Activated CD4-positive, alpha-beta memory T cell treated with anti-CD3 and anti-CD28 coated beads, Interleukin-2, amount 10 ng/mL, durations not matched to agents 7 days and 5 days (primary cell): ENCODE measurements at regions of chr6 and their contacts with region 1.

Region 1: GRCh38 chr6:158213925-158214674 is 46.0 kb downstream of the GTF2H5 start:
- DNase-seq: peak; percentile 61
- H3K4me3 Mint-ChIP-seq: no peak overlapping the region
- H3K27ac Mint-ChIP-seq: no peak overlapping the region
- H3K4me1 Mint-ChIP-seq: peaks cover 21% of the 10 kb centered on the region
- H3K27me3 Mint-ChIP-seq: peaks cover 2% of the 10 kb centered on the region

Region 2: GRCh38 chr6:158072083-158072721 is 141.9 kb before region 1 on chr6:
- CTCF ChIA-PET with region 1: no interaction called
- POLR2A ChIA-PET with region 1: no interaction called
- DNase-seq: peak; percentile 74
- H3K4me3 Mint-ChIP-seq: no peak overlapping the region
- H3K27ac Mint-ChIP-seq: no peak overlapping the region
- H3K4me1 Mint-ChIP-seq: peaks cover 46% of the 10 kb centered on the region
- H3K27me3 Mint-ChIP-seq: no peaks in the 10 kb centered on the region

Region 3: DNA sequence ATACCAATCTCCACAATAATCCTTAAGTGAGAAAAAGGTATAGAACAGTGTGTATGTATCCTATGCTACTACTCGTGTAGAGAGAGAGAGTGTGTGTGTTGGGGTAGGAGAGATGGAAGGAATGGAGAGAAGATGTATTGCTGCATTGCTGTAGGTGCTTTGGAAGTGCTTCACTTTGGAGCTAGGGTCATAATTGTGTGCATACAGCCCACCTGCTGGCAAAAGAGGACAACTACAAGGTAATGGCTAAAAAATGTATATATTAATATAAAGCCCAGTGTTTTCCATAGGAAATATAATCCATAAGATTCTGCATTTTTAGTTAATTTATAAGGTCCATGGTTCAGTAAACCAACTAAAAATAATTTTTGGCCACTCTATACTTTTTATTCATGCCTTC is 82.2 kb before region 1 on chr6:
- CTCF ChIA-PET with region 1: no interaction called
- POLR2A ChIA-PET with region 1: no interaction called
- DNase-seq: peak; percentile 23
- H3K4me3 Mint-ChIP-seq: no peak overlapping the region
- H3K27ac Mint-ChIP-seq: no peak overlapping the region
- H3K4me1 Mint-ChIP-seq: no peaks in the 10 kb centered on the region
- H3K27me3 Mint-ChIP-seq: no peaks in the 10 kb centered on the region

Region 4: DNA sequence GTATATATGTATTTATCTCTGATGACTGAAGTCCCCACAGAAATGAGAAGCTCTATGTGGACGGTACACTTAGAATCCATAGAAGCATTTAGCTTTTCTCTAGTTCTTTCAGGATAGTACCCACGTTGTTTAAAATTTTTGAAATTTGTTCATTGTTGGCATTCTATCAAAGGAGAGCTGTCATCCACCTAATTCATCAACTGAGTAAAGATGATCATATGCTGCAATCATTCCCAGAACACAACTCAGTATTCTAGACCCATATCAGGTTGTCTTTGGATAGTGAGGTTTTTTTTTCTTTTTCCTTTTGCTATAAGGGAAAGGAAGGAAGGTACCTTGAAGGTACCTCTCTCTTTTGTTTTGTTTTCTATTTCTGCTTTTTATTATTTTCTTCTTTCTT is 55.4 kb before region 1 on chr6:
- CTCF ChIA-PET with region 1: no interaction called
- POLR2A ChIA-PET with region 1: no interaction called
- DNase-seq: no peak
- H3K4me3 Mint-ChIP-seq: no peak overlapping the region
- H3K27ac Mint-ChIP-seq: no peak overlapping the region
- H3K4me1 Mint-ChIP-seq: no peaks in the 10 kb centered on the region
- H3K27me3 Mint-ChIP-seq: no peaks in the 10 kb centered on the region

Region 5: DNA sequence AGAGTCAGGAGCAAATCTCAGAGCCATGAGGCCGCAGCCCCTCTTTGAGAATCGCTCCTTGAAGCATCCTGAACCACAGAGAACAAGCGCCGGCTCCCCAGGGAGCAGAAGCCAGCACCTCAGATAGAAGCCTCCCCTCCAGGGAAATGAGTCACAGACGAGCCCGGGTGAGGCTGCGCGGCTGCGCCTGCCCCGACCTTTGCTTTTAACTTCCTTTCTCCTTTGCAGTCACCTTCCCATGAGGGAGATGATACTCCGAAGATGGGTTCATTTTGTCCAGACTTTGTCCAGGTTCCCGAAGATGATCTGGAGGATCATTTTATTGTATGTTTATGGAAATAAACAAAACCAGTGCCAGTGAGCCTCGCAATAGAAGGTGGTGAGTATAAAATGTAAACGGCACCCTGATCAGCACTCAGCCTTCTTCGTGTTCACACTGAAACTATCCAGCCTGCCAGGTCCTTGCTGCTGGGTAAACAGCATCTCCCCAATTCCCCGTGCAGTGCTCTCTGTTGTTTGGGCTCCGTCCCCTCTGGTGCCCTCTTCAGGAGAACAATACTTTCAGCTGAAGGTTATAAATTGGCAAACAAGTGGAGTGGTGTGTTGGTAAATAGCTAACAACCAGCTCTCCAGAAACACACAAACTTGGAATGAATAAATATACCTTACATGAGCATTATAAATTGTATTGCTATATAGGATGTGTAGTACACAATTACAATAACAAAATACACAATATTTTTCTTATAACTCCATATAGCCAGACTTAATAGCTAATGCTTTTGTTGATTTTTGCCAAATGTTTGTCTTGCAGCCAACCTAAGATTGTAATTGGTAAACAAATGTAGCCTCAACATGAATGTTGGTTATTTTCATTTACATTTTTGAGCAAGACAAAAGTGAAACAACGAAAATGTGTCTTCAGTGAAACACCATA is 304.4 kb after region 1 on chr6:
- CTCF ChIA-PET with region 1: interaction called, 12 read pairs
- POLR2A ChIA-PET with region 1: no interaction called
- DNase-seq: peak; percentile 74
- H3K4me3 Mint-ChIP-seq: peak overlapping the region; percentile 81
- H3K27ac Mint-ChIP-seq: peak overlapping the region; percentile 87
- H3K4me1 Mint-ChIP-seq: peaks cover 41% of the 10 kb centered on the region
- H3K27me3 Mint-ChIP-seq: peaks cover 11% of the 10 kb centered on the region

Region 6: DNA sequence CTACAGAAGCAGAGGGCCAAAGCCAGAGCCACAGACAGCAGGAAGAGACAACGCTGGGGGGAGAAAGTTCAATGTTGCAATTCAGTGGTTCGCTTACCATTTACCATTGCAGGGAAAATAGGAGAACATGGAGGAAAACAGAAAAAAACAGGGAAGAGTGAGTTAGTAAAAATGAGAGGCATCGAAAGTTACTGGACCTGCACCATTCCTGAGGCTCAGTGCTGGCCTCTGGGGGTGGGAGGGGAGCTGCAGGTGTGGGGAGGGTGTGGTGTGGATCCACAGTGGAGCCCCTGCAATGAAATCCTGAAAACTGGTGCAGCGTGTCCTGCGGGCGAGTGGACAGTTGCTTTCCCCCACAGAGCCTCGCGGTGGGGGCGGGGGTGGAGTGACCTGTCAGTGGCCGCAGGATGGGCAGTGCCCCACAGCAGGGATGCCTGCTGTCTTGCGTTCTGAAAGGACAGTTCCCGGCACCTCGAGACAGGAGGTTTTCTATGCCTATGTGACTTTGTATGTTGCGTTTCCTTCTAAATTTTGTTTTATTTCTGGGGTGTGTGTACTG is 351.5 kb after region 1 on chr6:
- CTCF ChIA-PET with region 1: interaction called, 10 read pairs
- POLR2A ChIA-PET with region 1: no interaction called
- DNase-seq: no peak
- H3K4me3 Mint-ChIP-seq: peak overlapping the region; percentile 62
- H3K27ac Mint-ChIP-seq: peak overlapping the region; percentile 94
- H3K4me1 Mint-ChIP-seq: peaks cover 91% of the 10 kb centered on the region
- H3K27me3 Mint-ChIP-seq: no peaks in the 10 kb centered on the region

Region 7: DNA sequence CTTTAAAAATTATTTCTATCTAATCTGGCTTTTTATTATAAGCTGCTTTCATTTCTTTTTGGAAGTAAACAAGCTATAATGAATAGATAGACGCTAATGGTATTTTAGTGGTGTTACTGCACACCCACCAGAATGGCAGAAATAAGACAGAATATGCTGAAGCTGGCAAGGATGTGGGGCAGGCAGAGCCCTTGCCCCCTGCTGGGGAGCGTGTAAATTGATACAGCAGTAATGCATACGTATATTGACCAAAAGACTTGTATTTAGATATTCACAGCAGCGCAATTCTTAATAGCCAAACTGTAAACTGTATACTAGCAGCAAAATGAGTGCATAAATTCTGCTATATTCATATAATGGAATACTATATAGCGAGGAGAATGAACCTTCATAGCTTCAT is 381.1 kb after region 1 on chr6:
- CTCF ChIA-PET with region 1: interaction called, 12 read pairs
- POLR2A ChIA-PET with region 1: no interaction called
- DNase-seq: no peak
- H3K4me3 Mint-ChIP-seq: no peak overlapping the region
- H3K27ac Mint-ChIP-seq: no peak overlapping the region
- H3K4me1 Mint-ChIP-seq: no peaks in the 10 kb centered on the region
- H3K27me3 Mint-ChIP-seq: no peaks in the 10 kb centered on the region

Region 8: GRCh38 chr6:158605266-158605878 is 391.3 kb after region 1 on chr6:
- CTCF ChIA-PET with region 1: interaction called, 37 read pairs
- POLR2A ChIA-PET with region 1: no interaction called
- DNase-seq: peak; percentile 60
- H3K4me3 Mint-ChIP-seq: no peak overlapping the region
- H3K27ac Mint-ChIP-seq: no peak overlapping the region
- H3K4me1 Mint-ChIP-seq: peaks cover 7% of the 10 kb centered on the region
- H3K27me3 Mint-ChIP-seq: no peaks in the 10 kb centered on the region